ENCODE measurements at regions of chr6 and their contacts with region 1.

Region 1: DNA sequence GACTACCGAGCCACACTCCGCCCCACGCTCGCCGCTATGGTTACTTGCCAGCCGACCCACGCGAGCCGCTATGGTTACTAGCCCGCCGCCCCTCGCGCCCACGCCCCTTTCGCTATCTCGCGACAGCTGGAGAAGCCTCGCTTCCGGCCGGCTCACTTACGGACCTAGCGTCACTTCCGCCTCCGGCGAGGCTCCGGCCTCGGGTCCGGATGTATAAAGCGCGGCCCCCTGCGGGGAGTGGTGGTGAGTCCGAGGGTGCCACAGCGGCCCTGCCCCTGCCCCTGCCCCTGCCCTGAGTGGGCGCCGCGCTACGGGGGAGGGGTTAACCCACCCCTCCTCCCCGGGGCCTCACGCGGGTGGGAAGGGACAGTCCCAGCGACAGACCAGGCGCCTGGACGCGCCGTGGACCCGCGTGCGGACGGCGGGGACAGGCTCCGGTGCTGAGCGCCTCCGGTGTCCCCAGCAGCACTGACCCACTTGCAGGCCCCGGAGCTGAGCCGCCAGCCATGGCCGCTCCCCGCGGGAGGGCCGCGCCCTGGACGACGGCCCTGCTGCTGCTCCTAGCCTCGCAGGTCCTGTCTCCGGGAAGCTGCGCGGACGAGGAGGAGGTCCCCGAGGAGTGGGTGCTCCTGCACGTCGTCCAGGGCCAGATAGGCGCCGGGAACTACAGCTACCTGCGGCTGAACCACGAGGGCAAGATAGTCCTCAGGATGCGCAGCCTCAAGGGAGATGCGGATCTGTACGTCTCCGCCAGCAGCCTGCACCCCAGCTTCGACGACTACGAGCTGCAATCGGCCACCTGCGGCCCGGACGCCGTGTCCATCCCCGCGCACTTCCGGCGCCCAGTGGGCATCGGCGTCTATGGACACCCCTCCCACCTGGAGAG is at the starts of genes C6orf120 and WDR27:
- DNase-seq: peak; percentile 99
- ATAC-seq: peak; percentile 98
- H3K4me3 ChIP-seq: peak within 1 kb of the TSS; percentile 98
- H3K27ac ChIP-seq: peak within 1 kb of the TSS; percentile 99
- H3K4me1 ChIP-seq: peaks cover 40% of the 10 kb centered on the region
- H3K27me3 ChIP-seq: no peaks in the 10 kb centered on the region
- CTCF ChIP-seq: no peak
- total RNA-seq, gene C6orf120: 22.2 TPM
- total RNA-seq, gene WDR27: 38.0 TPM

Region 2: DNA sequence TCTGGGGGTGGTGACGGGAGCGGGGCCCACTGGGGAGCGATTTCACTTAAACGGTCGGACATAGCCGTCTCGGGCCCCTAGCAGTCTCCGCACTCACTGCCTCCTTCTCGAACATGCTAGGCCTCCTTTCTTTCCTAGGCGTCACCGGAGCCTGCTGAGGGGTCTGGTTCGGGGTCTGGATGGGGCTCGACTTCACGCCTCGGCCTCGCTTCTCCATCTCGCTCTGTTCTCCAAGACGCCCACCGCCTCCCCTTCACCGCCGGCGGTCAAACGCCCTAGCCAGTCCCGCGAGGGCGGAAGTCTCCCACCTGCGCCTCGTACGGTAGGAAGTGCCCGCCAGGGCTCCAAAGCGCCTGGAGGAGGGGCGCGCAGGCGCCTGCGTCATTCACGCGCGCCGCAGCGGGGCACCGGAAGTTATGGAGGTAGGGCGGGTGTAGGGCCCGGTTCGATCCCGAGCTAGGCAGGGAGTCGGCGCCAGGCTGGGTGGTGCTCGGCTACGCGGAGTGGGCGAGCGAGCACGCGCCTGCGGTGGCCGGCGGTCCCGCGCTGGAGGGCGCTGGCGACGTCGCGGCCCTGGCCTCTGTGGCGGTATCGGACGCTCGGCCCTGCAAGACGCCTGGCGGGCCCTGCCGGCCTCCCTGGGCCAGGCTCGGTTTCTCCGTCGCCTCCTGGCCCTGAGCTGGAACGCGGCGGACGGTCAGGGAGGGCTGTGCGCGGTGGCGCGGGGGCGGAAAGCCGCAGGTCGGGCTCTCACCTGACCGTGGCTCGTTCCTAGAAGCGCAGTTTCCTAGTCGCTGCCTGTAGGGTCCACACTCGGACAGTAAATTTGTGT is 49.3 kb after region 1 on chr6 and contains the starts of genes DYNLT2 and ERMARD:
- intact Hi-C with region 1: loop called (anchors 10 kb)
- DNase-seq: peak; percentile 96
- ATAC-seq: peak; percentile 100
- H3K4me3 ChIP-seq: peak within 1 kb of the TSS; percentile 83
- H3K27ac ChIP-seq: peak within 1 kb of the TSS; percentile 99
- H3K4me1 ChIP-seq: peaks cover 23% of the 10 kb centered on the region
- H3K27me3 ChIP-seq: no peaks in the 10 kb centered on the region
- CTCF ChIP-seq: peak; percentile 34
- total RNA-seq, gene DYNLT2: 1.6 TPM
- total RNA-seq, gene ERMARD: 25.4 TPM

Measured in lower lobe of right lung (tissue), 2 donors.